MCF 10A (cell line): ENCODE measurements at regions of chr19 and their contacts with region 1.

Region 1: DNA sequence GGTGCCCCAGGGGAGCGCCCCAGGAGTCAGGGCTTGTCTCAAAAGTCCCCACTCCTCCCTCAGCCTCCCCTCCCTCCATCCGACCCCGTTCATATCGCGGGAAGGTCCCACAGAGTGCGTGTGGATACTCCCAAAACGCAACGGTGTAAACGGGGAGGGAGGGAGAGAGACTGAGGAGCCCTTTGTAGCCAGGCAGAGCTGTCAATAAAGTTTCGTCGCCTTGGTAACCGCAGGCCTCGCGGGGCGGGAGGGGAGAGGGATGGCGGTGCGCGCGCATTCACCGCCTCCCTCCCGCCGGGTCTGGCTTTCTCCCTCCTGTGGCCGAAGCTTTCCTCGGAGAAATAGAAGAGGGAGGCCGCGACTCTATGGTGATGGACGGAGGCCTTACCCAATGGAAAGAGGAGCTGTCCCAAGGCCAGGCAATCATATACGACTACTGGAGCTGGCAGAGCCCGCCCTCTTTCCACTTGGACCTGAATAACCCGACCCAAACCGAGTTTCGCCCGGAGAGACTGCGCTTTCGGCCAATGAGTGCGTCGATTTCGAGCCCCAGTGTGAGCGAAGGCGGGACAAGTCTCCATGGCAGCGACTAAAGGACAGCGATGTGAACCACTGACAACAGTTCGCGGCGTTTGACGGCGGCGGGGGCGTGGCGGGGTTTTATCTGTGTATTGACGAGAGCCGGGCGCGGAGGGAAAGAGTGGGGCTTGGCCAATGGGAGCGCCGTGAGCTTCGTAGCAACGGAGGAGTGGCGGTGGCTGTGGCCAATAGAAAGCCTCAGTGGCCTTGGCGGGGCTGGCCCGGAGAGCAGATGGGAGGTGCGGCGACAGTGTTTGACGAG is at the start of gene KMT5C:
- DNase-seq: peak; percentile 100
- H3K4me3 Mint-ChIP-seq: peak within 1 kb of the TSS; percentile 80
- H3K27ac Mint-ChIP-seq: peak within 1 kb of the TSS; percentile 100
- H3K4me1 Mint-ChIP-seq: peaks cover 33% of the 10 kb centered on the region
- H3K27me3 Mint-ChIP-seq: no peaks in the 10 kb centered on the region
- CTCF ChIP-seq: no peak
- total RNA-seq, gene KMT5C: 12.9 and 16.8 TPM in 2 replicates

Region 2: GRCh38 chr19:55258828-55259539 is 80.3 kb before region 1 on chr19 and contains the start of gene PPP6R1:
- CTCF ChIA-PET with region 1: no interaction called
- POLR2A ChIA-PET with region 1: interaction called, 21 read pairs
- intact Hi-C with region 1: no loop called
- DNase-seq: peak; percentile 99
- H3K4me3 Mint-ChIP-seq: peak within 1 kb of the TSS; percentile 88
- H3K27ac Mint-ChIP-seq: peak within 1 kb of the TSS; percentile 92
- H3K4me1 Mint-ChIP-seq: peaks cover 34% of the 10 kb centered on the region
- H3K27me3 Mint-ChIP-seq: no peaks in the 10 kb centered on the region
- CTCF ChIP-seq: no peak
- total RNA-seq, gene PPP6R1: 70.6 and 78.9 TPM in 2 replicates

Region 3: GRCh38 chr19:55301459-55302317 is 37.6 kb before region 1 on chr19:
- CTCF ChIA-PET with region 1: interaction called, 36 read pairs
- POLR2A ChIA-PET with region 1: interaction called, 23 read pairs
- intact Hi-C with region 1: loop called (anchors 2 kb)
- DNase-seq: peak; percentile 81
- H3K4me3 Mint-ChIP-seq: peak overlapping the region; percentile 58
- H3K27ac Mint-ChIP-seq: no peak overlapping the region
- H3K4me1 Mint-ChIP-seq: no peaks in the 10 kb centered on the region
- H3K27me3 Mint-ChIP-seq: no peaks in the 10 kb centered on the region
- CTCF ChIP-seq: peak; percentile 96

Region 4: GRCh38 chr19:55353803-55354697 is 14.8 kb after region 1 on chr19:
- CTCF ChIA-PET with region 1: interaction called, 8 read pairs
- POLR2A ChIA-PET with region 1: interaction called, 14 read pairs
- intact Hi-C with region 1: loop called (anchors 2 kb)
- DNase-seq: no peak
- H3K4me3 Mint-ChIP-seq: peak overlapping the region; percentile 70
- H3K27ac Mint-ChIP-seq: no peak overlapping the region
- H3K4me1 Mint-ChIP-seq: peaks cover 19% of the 10 kb centered on the region
- H3K27me3 Mint-ChIP-seq: peaks cover 13% of the 10 kb centered on the region
- CTCF ChIP-seq: no peak

Region 5: GRCh38 chr19:55407800-55408532 is 68.7 kb after region 1 on chr19:
- CTCF ChIA-PET with region 1: no interaction called
- POLR2A ChIA-PET with region 1: interaction called, 24 read pairs
- intact Hi-C with region 1: no loop called
- DNase-seq: peak; percentile 100
- H3K4me3 Mint-ChIP-seq: peak overlapping the region; percentile 94
- H3K27ac Mint-ChIP-seq: peak overlapping the region; percentile 99
- H3K4me1 Mint-ChIP-seq: peaks cover 21% of the 10 kb centered on the region
- H3K27me3 Mint-ChIP-seq: no peaks in the 10 kb centered on the region
- CTCF ChIP-seq: no peak

Region 6: DNA sequence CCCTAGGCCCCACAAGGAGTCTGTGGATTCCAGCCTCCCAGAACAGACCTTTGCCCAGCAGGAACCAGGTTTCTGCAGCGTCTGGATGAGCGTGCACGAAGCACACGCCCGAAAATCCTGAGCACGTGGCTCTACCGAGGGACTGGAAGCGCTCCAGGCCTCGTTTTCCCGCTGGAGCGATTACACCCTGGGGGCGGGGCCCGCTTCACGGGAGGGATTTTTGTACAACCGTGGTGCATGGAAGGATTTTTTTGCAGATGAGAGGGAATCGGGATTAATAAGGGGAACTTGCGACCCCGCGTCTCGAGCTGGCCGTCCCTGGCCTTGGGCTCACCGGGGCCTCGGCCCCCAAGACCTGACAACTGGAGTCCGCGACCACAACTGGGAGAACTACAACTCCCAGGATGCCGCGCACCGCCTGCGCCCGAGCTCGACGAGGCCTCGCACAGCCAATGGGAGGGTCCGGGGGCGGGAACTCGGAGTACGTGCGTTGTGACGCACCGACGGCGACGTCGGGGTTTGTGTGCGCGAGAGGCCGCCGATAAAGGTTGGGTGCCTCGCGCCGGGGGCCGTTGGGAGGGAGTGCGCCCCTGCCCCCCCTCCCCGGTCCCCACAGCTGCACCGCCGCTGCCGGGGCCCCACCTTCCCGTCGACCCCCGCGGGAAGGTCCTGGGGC is 137.0 kb after region 1 on chr19 and contains the start of gene ZNF628:
- CTCF ChIA-PET with region 1: interaction called, 4 read pairs
- POLR2A ChIA-PET with region 1: interaction called, 12 read pairs
- intact Hi-C with region 1: no loop called
- DNase-seq: peak; percentile 99
- H3K4me3 Mint-ChIP-seq: peak within 1 kb of the TSS; percentile 89
- H3K27ac Mint-ChIP-seq: peak within 1 kb of the TSS; percentile 91
- H3K4me1 Mint-ChIP-seq: peaks cover 33% of the 10 kb centered on the region
- H3K27me3 Mint-ChIP-seq: no peaks in the 10 kb centered on the region
- CTCF ChIP-seq: no peak
- total RNA-seq, gene ZNF628: 6.2 and 12.1 TPM in 2 replicates